Body of pancreas (tissue), 4 donors: ENCODE measurements at regions of chr6 and their contacts with region 1.

Region 1: DNA sequence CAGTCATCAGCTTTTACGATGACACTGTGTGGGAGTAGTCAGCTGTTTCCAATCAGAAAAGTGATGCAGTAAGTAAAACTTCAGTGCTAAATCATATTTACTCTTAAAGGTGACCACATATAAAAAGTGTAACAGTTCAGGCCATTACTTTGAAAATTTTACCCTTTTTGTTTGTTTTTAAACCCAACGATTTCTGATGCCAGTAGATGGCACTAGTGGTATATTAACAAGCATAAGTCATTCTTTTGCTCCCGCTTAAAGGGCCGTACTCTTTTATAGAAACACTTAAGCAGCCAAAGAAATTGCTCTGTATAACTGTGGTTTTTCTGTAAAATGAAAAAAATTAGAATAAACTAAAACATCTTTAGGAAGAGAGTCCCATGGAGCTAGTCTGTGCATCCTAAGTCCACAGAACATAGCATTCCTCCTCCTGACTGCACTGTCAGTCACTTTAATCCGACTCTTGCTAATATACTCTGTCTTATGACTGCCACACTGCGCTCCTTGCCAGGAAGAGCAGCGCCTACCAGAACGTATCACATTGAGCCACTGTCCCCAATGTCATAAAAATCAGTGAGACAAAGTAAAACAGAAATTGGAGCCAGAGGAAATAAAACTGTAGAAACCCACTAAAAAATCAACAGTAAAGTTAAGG is 25.0 kb downstream of the HEBP2 start:
- DNase-seq: peak in 1 of 4 donors; percentile 48
- ATAC-seq: peak; percentile 66
- H3K4me3 ChIP-seq: no peak overlapping the region
- H3K27ac ChIP-seq: no peak overlapping the region
- H3K4me1 ChIP-seq: no peaks in the 10 kb centered on the region
- H3K27me3 ChIP-seq: no peaks in the 10 kb centered on the region
- CTCF ChIP-seq: peak; percentile 18 to 82 (median 70)
- POLR2A ChIP-seq: no peak

Region 2: GRCh38 chr6:138514860-138515540 is 85.9 kb after region 1 on chr6:
- intact Hi-C with region 1: loop called (anchors 5 kb)
- DNase-seq: no peak
- ATAC-seq: no peak
- H3K4me3 ChIP-seq: no peak overlapping the region
- H3K27ac ChIP-seq: no peak overlapping the region
- H3K4me1 ChIP-seq: no peaks in the 10 kb centered on the region
- H3K27me3 ChIP-seq: no peaks in the 10 kb centered on the region
- CTCF ChIP-seq: no peak
- POLR2A ChIP-seq: no peak

Region 3: GRCh38 chr6:138590796-138591709 is 162.0 kb after region 1 on chr6:
- intact Hi-C with region 1: loop called (anchors 5 kb)
- DNase-seq: peak; percentile 72 to 78 (median 76)
- ATAC-seq: peak; percentile 64
- H3K4me3 ChIP-seq: no peak overlapping the region
- H3K27ac ChIP-seq: no peak overlapping the region
- H3K4me1 ChIP-seq: peaks cover 10% of the 10 kb centered on the region
- H3K27me3 ChIP-seq: no peaks in the 10 kb centered on the region
- CTCF ChIP-seq: peak; percentile 71 to 85 (median 73)
- POLR2A ChIP-seq: no peak

Region 4: DNA sequence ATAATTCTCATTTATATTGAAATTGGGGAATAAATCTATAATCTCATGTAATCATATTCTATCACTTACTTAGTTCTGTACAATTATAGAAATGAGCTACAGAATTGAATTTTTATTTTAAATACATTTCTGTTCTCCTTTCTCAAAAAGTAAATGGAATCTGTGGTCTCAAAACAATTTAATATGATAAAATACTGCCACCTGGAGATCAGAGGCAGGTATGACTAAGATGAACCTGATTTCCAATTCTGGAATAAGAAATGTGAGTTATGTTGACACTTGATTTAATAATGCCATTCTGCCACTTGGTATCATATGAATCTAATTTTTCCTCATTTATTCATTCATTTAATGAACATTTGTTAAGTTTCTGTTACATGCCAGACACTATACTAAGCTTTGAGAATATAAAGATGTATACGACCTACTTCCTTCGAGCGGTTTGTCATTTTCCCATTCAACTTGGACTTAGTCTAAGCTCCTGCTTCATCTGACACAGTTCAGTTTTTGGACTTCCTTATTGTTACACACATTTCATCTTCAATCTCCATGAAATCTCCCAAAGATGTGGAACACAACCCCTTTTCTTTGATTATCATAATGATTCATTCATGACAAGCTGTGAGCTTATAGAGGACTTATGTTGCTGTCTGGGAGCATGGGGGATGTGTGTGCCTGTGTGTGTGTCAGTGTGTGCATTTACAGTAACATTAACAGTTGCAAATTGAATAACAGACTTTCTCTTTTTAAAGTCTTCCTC is 337.0 kb after region 1 on chr6:
- intact Hi-C with region 1: loop called (anchors 5 kb)
- DNase-seq: peak in 2 of 4 donors; percentile 11 to 18
- ATAC-seq: peak; percentile 56
- H3K4me3 ChIP-seq: no peak overlapping the region
- H3K27ac ChIP-seq: no peak overlapping the region
- H3K4me1 ChIP-seq: no peaks in the 10 kb centered on the region
- H3K27me3 ChIP-seq: no peaks in the 10 kb centered on the region
- CTCF ChIP-seq: peak in 6 of 7 experiments; percentile 53 to 83 (median 76)
- POLR2A ChIP-seq: no peak